AG04450 (cell line): ENCODE measurements at regions of chr17 and their contacts with region 1.

Region 1: DNA sequence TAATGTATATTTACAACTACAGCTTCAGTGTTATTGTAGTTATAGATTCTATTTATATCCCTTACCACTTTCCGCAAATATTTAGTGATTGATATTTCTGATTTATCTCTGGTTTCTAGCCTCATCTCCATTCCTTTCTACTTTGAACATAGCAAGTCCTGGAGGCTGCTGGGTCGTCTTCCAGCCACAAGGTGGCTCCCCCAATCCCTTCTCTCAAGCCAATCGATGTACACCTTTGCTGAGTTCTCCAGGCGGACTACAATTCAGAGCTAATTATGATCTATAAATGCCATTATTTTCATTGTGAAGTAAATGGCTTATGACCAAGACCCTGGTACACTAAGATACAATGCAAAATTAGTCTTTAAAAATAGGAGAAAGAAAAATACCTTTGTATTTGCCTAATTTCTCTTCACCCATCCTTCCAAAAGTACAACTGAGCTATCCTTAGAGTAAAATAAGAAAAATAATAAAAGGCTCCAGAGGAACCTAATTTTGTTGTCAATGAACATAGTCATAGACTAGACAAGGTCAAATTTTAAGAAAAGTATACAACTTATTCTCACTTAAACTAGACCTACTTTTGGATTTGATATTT is 122.1 kb downstream of the SKAP1 start:
- DNase-seq: peak; percentile 32
- H3K4me3 ChIP-seq: no peak overlapping the region
- H3K27ac ChIP-seq: no peak overlapping the region
- H3K27me3 ChIP-seq: peaks cover 51% of the 10 kb centered on the region
- CTCF ChIP-seq: peak; percentile 96

Region 2: GRCh38 chr17:48322060-48322459 is 14.1 kb after region 1 on chr17:
- CTCF ChIA-PET with region 1: no interaction called
- POLR2A ChIA-PET with region 1: no interaction called
- DNase-seq: no peak
- H3K4me3 ChIP-seq: no peak overlapping the region
- H3K27ac ChIP-seq: no peak overlapping the region
- H3K27me3 ChIP-seq: peaks cover 14% of the 10 kb centered on the region
- CTCF ChIP-seq: peak; percentile 28

Region 3: DNA sequence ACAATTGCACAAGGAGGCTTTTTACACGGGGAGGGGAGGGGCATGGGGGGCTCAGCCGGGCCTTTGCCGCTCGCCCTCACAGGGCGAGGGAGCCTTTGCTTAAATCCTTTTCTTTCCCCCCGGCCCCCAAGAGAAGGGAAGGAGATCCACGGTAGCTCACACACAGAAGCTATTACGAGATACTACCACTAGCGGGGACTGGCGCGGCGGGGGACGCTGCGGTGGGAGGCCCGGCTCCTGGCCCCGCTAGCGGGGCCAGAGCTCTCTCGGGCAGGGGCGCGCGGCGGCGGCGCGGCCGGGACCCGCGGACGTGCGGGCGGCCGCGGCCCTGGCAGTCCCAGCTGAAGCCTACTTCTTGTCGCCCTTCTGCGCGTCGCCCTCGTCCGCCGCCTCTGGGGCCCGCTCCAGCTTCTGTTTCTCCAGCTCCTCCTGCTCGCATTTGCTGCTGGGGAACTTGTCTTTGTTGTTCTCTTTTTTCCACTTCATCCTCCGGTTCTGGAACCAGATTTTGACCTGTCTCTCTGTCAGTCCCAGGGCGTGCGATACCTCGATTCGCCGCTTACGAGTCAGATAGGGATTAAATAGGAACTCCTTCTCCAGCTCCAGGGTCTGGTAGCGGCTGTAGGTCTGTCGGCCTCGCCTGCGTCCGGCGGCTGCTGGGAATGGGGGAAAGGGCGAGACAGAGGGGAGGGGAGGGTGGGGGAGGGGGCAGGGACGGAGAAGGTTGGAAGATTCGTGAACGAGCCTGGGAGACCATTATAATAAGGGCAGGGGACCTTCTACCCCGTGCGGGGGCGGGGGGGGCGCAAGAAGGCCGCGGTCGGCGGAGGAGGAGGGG is 305.2 kb after region 1 on chr17:
- CTCF ChIA-PET with region 1: interaction called, 41 read pairs
- POLR2A ChIA-PET with region 1: no interaction called
- DNase-seq: no peak
- H3K4me3 ChIP-seq: peak overlapping the region; percentile 67
- H3K27ac ChIP-seq: peak overlapping the region; percentile 31
- H3K27me3 ChIP-seq: peaks cover 45% of the 10 kb centered on the region
- CTCF ChIP-seq: peak; percentile 38